Mammary epithelial cell (primary cell): ENCODE measurements at regions of chr9 and their contacts with region 1.

Region 1: DNA sequence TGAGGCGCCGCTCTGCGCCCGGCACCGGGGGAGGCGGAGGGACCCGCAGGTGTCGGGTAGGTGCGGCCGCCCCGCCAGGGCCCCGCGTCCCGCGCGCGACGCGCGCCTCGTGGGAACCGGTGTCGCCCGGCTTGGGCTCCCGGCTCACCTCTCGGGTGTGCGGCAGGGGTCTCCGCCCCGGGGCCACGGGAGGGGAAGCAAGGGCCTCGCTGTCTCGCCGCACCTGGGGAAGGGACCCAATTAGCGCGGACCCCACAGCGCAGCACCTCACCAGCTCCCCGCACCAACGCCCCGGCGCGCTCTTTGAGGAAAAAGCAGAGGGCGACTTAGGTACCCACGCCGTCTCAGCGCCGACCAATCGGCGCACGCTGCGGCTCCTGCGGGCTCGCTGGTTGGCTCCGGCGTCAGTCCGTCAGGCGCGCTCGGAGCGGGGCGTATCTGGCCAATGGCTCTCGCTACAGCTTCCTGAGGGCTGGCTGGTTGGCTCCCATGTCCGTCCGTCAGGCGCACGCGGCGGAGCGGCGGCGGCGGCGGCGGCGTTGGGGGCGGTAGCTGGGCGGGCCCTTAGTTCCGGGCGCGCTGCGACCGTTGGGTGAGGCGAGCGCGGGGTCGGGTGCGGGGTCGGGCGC is at the start of gene TRAF2:
- DNase-seq: peak; percentile 100
- H3K4me3 ChIP-seq: peak within 1 kb of the TSS; percentile 55 to 83 (median 82)
- H3K27ac ChIP-seq: peak within 1 kb of the TSS; percentile 65
- H3K4me1 ChIP-seq: peaks cover 40% of the 10 kb centered on the region
- H3K27me3 ChIP-seq: no peaks in the 10 kb centered on the region
- CTCF ChIP-seq: no peak
- total RNA-seq, gene TRAF2: 8.3 to 27.8 TPM

Region 2: DNA sequence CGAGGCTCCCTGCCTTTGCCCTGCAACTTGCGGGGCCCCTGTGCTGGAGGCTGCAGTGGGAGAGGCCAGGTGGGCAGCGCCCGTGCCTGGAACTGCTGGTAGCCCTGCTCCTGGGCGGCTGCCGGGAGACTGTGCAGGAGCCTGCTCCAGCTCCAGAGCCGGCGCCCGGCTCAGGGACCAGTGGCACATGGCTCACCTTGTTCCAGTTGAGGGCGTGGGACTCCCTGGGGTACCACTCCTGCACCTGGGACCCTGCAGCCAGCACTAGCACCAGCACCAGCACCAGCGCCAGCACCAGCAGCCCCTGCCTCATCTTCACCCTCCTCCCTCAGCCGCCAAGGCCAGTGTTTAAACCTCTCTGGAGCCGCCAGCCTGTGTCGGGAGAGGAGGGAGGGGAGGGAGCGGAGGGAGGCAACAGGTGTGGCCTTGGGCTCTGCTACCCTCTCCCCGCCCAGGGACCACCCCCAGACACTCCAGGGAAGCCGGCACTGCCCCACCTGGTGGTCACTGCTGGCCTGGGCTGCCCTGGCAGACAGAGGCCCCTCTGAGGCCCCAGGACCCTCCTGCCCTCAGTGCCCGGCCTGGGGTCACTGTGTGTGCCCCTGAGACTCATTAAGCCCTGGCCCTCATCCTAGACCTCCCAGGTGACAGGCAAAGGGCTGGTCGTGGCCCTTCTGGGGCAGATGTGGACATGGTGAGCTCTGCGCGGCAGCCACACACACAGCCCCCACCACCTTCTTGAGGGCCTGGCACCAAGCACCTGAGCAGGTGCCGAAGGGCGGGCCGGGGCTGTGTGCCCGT is 143.3 kb before region 1 on chr9 and contains the start of gene LCN10:
- CTCF ChIA-PET with region 1: no interaction called
- dilution Hi-C with region 1: no loop called
- in situ Hi-C with region 1: no loop called
- intact Hi-C with region 1: no loop called
- DNase-seq: no peak
- H3K4me3 ChIP-seq: no peak within 1 kb of the TSS
- H3K27ac ChIP-seq: no peak within 1 kb of the TSS
- H3K4me1 ChIP-seq: peaks cover 9% of the 10 kb centered on the region
- H3K27me3 ChIP-seq: peaks cover 18% of the 10 kb centered on the region
- CTCF ChIP-seq: peak in 1 of 2 donors; percentile 20
- total RNA-seq, gene LCN10: not detected

Region 3: DNA sequence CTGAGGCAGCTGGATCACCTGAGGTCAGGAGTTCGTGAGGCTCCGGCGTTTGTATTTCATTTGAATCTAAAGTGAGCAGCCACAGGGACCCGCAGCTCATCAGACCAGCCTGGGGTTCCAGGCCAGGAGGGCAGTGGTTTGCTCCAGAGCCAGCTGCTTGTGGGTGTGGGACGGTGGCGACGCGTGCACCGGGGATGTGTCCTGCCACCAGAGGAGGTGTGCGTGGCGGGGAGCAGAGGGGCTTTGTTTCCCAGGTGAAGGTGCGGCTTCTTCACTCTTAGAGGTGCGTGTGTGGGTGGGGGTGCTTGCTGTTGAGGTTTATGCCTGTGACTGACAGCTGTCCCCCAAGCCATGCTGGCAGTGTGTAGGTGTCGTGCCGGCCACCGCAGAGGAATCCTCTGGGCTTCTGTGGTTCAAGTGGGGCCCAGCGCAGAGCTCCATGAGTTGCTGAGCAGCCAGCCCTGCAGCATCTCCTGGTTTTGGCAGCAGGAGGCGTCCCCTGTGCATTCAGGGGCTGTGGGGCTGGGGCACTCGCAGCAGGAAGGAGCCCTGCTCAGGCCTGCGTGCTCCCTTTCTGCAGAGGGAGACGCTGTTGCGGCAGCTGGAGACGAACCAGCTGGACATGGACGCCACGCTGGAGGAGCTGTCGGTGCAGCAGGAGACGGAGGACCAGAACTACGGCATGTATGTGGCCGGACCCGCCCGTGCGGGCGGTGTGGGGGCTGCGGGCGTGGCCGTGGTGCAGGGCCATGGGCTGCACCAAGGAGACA is 50.7 kb before region 1 on chr9:
- CTCF ChIA-PET with region 1: no interaction called
- dilution Hi-C with region 1: no loop called
- in situ Hi-C with region 1: no loop called
- intact Hi-C with region 1: no loop called
- DNase-seq: no peak
- H3K4me3 ChIP-seq: no peak overlapping the region
- H3K27ac ChIP-seq: no peak overlapping the region
- H3K4me1 ChIP-seq: peaks cover 2% of the 10 kb centered on the region
- H3K27me3 ChIP-seq: no peaks in the 10 kb centered on the region
- CTCF ChIP-seq: no peak

Region 4: GRCh38 chr9:136849038-136849959 is 36.8 kb before region 1 on chr9 and contains the start of gene PHPT1:
- CTCF ChIA-PET with region 1: no interaction called
- dilution Hi-C with region 1: no loop called
- in situ Hi-C with region 1: no loop called
- intact Hi-C with region 1: loop called (anchors 2 kb)
- DNase-seq: peak; percentile 98
- H3K4me3 ChIP-seq: peak within 1 kb of the TSS; percentile 82 to 93 (median 92)
- H3K27ac ChIP-seq: peak within 1 kb of the TSS; percentile 67
- H3K4me1 ChIP-seq: peaks cover 19% of the 10 kb centered on the region
- H3K27me3 ChIP-seq: peaks cover 22% of the 10 kb centered on the region
- CTCF ChIP-seq: no peak
- total RNA-seq, gene PHPT1: 55.3 to 143 TPM

Region 5: GRCh38 chr9:136961279-136962065 is 75.4 kb after region 1 on chr9:
- CTCF ChIA-PET with region 1: no interaction called
- dilution Hi-C with region 1: no loop called
- in situ Hi-C with region 1: no loop called
- intact Hi-C with region 1: no loop called
- DNase-seq: no peak
- H3K4me3 ChIP-seq: no peak overlapping the region
- H3K27ac ChIP-seq: no peak overlapping the region
- H3K4me1 ChIP-seq: peaks cover 5% of the 10 kb centered on the region
- H3K27me3 ChIP-seq: no peaks in the 10 kb centered on the region
- CTCF ChIP-seq: no peak

Region 6: DNA sequence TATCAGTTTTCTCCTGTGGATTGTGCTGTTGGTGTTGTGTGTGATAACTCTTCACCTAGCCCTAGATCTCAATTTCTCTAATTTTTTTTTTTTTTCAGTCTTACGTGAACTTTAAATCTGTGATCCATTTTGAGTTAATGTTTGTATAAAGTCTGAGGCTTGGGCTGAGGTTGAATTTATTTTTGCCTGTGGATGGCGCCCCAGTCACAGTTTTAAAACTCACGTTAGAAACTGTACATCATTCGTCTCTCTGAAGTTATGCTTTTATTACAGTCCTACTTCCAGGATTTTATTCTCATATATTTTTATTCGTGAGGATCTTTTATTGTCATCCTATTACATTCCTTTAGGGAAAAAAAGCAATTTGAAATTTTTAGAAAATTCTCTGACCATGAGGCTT is 835.8 kb after region 1 on chr9:
- CTCF ChIA-PET with region 1: no interaction called
- dilution Hi-C with region 1: no loop called
- in situ Hi-C with region 1: no loop called
- intact Hi-C with region 1: no loop called
- DNase-seq: no peak
- H3K4me3 ChIP-seq: no peak overlapping the region
- H3K27ac ChIP-seq: no peak overlapping the region
- H3K4me1 ChIP-seq: peaks cover 30% of the 10 kb centered on the region
- H3K27me3 ChIP-seq: no peaks in the 10 kb centered on the region
- CTCF ChIP-seq: no peak